Dorsolateral prefrontal cortex (tissue), 120 donors: ENCODE measurements at regions of chr9 and their contacts with region 1.

Region 1: DNA sequence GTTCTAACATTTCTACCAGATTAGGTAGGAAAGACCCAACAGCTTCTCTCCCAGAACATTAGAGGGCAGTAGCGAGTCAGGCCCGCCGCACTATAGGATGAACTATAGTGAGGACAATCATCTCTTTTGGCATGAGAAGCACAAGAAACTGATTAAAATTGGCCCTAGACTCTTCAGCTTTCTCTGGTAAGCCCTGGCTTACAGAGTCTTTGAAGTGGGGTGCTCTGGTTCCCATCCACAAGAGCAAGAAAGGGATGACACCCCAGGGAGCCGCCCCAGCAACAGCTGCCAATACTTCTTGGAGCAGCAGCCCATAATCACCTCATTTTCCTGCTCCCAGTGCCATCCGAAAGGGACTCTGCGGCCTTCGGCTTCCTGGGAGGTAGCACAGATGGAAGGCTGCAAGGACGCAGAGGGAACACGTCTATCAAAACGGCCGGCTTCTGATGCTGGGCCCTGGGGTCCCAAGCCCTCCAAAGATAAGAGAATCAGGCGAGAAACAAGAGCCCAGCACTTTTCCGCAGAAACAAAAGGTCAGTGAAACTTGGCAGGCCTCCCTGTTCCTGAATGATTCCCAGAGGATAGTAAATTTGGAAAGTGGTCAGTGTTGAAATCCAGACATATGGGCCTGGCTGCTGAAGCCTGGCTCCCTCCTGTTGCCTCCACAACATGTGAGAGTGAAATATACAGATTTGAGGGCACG is 69.3 kb downstream of the HSD17B3 start:
- DNase-seq: peak in 2 of 10 donors; percentile 49 to 73
- H3K4me3 ChIP-seq: no peak overlapping the region
- H3K27ac ChIP-seq: peak overlapping the region in 19 of 59 donors; percentile 12 to 83 (median 40)
- H3K27me3 ChIP-seq: no peaks in the 10 kb centered on the region
- CTCF ChIP-seq: peak; percentile 61 to 92 (median 80)

Region 2: GRCh38 chr9:96317335-96317980 is 84.8 kb after region 1 on chr9:
- intact Hi-C with region 1: loop called (anchors 2 to 5 kb)
- DNase-seq: peak in 8 of 10 donors; percentile 20 to 80 (median 64)
- H3K4me3 ChIP-seq: no peak overlapping the region
- H3K27ac ChIP-seq: no peak overlapping the region
- H3K27me3 ChIP-seq: no peaks in the 10 kb centered on the region
- CTCF ChIP-seq: peak; percentile 67 to 95 (median 82)

Region 3: GRCh38 chr9:96661711-96662110 is 429.0 kb after region 1 on chr9:
- intact Hi-C with region 1: loop called (anchors 5 to 10 kb)
- DNase-seq: no peak
- H3K4me3 ChIP-seq: no peak overlapping the region
- H3K27ac ChIP-seq: no peak overlapping the region
- H3K27me3 ChIP-seq: no peaks in the 10 kb centered on the region
- CTCF ChIP-seq: no peak

Region 4: DNA sequence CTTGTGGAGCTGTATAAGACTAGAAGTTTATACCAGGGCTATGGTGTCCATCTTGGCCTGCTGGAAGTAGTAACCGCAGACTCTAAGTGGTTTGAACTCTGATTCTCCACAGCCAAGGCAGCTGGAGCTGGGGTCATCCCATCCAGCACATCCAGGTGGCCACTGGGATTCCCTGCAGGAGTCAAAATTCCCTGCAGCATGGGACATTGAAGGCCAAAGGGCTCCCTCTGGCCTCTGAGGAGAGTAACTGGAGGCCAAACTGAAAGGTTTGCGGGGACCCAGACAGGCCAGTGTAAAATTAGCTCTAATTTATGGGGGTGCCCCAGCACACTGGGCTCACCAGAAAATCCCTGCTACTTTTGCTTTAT is 434.7 kb after region 1 on chr9:
- intact Hi-C with region 1: loop called (anchors 5 to 10 kb)
- DNase-seq: no peak
- H3K4me3 ChIP-seq: no peak overlapping the region
- H3K27ac ChIP-seq: no peak overlapping the region
- H3K27me3 ChIP-seq: no peaks in the 10 kb centered on the region
- CTCF ChIP-seq: no peak